OCI-LY7 (cell line): ENCODE measurements at regions of chr1 and their contacts with region 1.

Region 1: GRCh38 chr1:117499071-117499470 is 106.8 kb upstream of the TENT5C start:
- DNase-seq: no peak
- H3K4me3 ChIP-seq: no peak overlapping the region
- H3K27ac ChIP-seq: no peak overlapping the region
- H3K4me1 ChIP-seq: no peaks in the 10 kb centered on the region
- CTCF ChIP-seq: no peak

Region 2: GRCh38 chr1:117312225-117313138 is 186.6 kb before region 1 on chr1:
- CTCF ChIA-PET with region 1: no interaction called
- POLR2A ChIA-PET with region 1: no interaction called
- intact Hi-C with region 1: loop called (anchors 10 kb)
- DNase-seq: peak; percentile 42
- H3K4me3 ChIP-seq: no peak overlapping the region
- H3K27ac ChIP-seq: no peak overlapping the region
- H3K4me1 ChIP-seq: no peaks in the 10 kb centered on the region
- CTCF ChIP-seq: peak; percentile 80

Region 3: DNA sequence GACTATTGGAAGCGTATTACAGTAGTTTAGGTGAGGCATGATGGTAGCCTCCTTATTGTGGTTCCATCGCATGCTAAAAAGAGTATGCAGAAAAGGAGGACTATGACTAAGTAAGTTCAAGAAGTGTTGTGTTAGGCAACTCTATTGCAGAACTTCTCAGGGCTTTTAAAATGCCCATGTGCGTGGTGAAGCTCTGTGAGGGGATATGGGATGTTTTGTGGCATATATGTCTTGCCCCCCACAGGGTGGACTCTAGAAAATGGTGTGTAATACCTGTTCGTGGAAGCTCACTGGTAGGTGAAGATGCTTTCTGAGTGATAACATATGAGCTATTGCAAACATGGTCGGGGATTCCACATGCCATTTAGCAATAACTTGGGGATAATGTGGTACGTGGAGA is 100.1 kb before region 1 on chr1:
- CTCF ChIA-PET with region 1: no interaction called
- POLR2A ChIA-PET with region 1: no interaction called
- intact Hi-C with region 1: no loop called
- DNase-seq: no peak
- H3K4me3 ChIP-seq: no peak overlapping the region
- H3K27ac ChIP-seq: no peak overlapping the region
- H3K4me1 ChIP-seq: no peaks in the 10 kb centered on the region
- CTCF ChIP-seq: no peak